Activated T-helper 1 cell treated with anti-CD3 and anti-CD28 coated beads, Interleukin-12 subunit alpha, Interleukin-12 subunit beta, Interleukin-2, Interleukin-4 antibody, amounts not matched to agents 30 ng/mL and 10 ng/mL and 1 ng/mL, durations not matched to agents 14 hours and 24 hours and 36 hours (primary cell): ENCODE measurements at regions of chr14 and their contacts with region 1.

Region 1: DNA sequence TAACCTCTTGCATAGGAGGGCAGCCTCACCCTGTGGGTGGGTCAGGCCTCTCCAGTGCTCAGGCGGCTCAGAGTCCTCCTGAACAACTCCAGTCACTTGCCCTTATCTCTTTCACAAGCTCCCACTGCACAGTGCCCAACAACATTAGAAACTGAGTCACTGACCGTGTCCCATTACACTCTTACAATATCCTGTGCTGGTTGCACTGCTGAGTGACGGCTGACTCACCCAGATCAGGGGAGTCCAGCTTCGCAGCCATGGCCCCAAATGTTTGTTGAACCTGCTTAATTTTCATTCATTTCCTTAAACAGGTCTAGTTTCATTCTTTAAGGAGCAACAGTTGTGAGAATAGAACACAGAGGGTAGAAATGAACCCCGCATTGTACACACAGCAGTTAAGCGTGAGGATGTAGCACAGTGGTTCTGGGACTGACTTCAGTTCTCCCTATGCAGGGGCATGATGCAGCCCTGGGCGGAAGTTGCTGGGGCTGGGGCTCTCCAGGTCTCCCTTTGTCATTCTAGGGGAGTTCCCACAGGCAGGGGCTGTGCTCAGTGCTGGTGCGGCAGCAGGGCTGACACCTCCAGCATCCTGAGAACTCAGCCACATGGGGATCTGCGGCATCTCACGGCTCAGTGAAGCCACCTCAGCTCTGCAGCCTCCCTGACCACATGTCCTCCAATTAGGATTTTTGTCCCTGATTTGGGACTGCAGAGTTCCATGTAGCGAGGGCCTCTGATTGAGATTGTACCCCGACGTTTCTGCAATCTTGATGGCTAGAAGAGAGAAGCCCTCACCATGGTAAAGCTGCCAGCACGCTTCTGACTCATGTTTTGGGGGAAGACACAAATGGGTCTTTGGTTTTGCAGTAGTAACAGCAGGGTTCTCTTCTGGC is 16.1 kb downstream of the GPR68 start:
- DNase-seq: peak; percentile 87
- H3K4me3 Mint-ChIP-seq: peak overlapping the region; percentile 80
- H3K27ac Mint-ChIP-seq: peak overlapping the region; percentile 100
- H3K4me1 Mint-ChIP-seq: peaks cover 89% of the 10 kb centered on the region
- H3K27me3 Mint-ChIP-seq: no peaks in the 10 kb centered on the region

Region 2: DNA sequence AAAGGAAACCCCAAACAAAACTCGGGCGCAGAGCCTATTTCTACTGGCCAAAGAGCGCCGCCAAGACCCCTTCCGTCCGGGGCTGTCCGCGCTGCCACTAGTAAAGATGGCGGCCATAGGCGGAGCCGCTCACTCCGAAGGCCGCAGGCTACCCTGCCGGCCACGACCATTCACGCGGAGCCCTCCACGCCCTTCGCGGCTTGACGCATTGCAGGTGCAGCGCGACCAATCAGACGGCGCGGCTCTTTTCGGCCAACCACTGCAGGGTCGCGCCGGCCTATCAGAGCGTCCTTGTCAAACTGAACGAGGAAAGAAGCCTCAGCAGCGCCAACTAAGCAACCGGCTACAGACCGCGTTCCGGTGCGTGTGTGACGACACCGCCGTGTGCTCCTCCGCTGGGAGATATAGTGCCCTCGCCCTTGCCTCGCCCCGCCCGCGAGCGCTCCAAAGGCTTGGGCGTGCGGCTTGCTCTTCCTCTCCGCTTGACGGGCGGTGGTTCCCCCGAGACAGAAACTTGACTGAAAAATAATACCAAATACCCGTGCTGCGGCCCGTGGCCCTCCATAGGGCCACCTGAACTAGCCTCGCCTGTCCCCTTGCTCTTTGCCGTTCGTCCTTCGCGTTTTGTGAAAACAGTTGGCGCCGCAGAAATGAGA is 845.2 kb before region 1 on chr14:
- intact Hi-C with region 1: loop called (anchors 1 kb)
- DNase-seq: peak; percentile 98
- H3K4me3 Mint-ChIP-seq: no peak overlapping the region
- H3K27ac Mint-ChIP-seq: no peak overlapping the region
- H3K4me1 Mint-ChIP-seq: peaks cover 6% of the 10 kb centered on the region
- H3K27me3 Mint-ChIP-seq: peaks cover 1% of the 10 kb centered on the region

Region 3: DNA sequence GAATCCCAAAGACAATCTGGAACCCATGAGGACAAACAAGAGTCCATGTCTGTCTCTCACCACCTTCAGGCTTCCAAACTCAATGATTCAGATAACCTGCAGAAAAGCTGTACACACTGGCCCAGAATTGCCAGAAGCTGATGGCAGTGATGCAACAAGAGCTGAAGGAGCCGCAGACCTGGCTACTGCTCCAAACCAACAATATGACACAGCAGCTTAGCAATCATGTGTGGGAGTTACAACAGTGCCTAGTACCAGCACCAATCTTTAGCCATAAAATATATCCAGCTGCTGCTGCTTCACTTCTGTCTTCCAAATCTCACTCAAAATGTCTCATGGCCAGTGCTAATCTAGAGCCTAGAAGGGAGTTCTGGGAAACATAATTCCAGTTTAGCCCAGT is 189.9 kb before region 1 on chr14:
- intact Hi-C with region 1: loop called (anchors 5 kb)
- DNase-seq: no peak
- H3K4me3 Mint-ChIP-seq: no peak overlapping the region
- H3K27ac Mint-ChIP-seq: no peak overlapping the region
- H3K4me1 Mint-ChIP-seq: peaks cover 73% of the 10 kb centered on the region
- H3K27me3 Mint-ChIP-seq: no peaks in the 10 kb centered on the region

Region 4: GRCh38 chr14:91193069-91193468 is 35.3 kb before region 1 on chr14:
- intact Hi-C with region 1: loop called (anchors 1 kb)
- DNase-seq: no peak
- H3K4me3 Mint-ChIP-seq: no peak overlapping the region
- H3K27ac Mint-ChIP-seq: no peak overlapping the region
- H3K4me1 Mint-ChIP-seq: peaks cover 43% of the 10 kb centered on the region
- H3K27me3 Mint-ChIP-seq: no peaks in the 10 kb centered on the region

Region 5: DNA sequence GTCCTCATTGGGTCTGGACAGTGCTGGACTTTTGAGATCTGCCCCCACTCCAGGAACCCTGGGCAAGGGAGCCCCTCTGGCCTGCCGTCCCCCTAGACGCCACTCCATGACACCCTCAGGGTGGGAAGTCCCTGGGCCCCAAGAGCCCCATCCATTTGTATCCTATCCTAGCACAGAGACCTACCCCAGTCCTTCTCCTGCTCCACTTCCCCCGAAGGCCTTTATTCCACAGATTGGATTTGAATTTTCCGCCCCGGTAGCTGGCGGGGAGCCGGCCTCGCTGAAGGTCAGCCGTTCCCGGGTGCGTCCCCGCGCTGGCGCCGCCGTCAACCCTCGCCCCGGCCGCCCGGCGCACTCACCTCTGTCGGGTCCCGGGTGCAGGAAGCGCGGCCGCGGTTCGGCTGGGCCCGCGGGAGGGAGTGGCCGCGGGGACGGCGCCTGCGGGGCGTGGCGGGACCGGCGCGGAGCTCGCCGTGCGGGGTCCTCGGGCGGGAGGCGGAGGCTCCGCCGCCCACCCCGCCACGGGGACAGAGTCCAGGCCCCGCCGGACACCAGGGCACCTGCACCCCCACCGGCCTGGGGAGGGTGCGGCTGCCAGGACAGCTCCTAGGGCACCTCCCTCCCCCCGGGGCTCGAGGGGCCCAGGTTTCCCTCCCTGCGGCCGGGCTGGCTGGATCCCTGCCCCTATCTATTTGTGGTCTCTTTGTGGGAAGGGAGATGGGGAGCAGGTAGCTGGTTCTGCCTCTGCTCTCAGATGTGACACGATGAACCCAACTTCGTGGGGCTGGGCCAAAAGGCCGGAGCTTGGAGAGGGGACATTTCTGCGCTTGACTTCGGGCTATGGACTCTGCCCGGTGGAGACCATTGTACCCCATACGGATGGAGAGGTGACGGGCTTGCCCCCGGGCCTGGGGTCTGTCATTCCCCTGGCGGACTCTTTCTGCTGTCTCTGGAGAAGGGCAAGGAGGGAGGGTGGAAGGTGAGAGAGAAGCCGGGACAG is 36.1 kb after region 1 on chr14:
- intact Hi-C with region 1: loop called (anchors 1 kb)
- DNase-seq: no peak
- H3K4me3 Mint-ChIP-seq: peak overlapping the region; percentile 72
- H3K27ac Mint-ChIP-seq: peak overlapping the region; percentile 45
- H3K4me1 Mint-ChIP-seq: peaks cover 70% of the 10 kb centered on the region
- H3K27me3 Mint-ChIP-seq: no peaks in the 10 kb centered on the region

Region 6: GRCh38 chr14:91350813-91351511 is 122.6 kb after region 1 on chr14:
- intact Hi-C with region 1: loop called (anchors 1 kb)
- DNase-seq: peak; percentile 72
- H3K4me3 Mint-ChIP-seq: peak overlapping the region; percentile 74
- H3K27ac Mint-ChIP-seq: peak overlapping the region; percentile 94
- H3K4me1 Mint-ChIP-seq: peaks cover 89% of the 10 kb centered on the region
- H3K27me3 Mint-ChIP-seq: no peaks in the 10 kb centered on the region

Region 7: DNA sequence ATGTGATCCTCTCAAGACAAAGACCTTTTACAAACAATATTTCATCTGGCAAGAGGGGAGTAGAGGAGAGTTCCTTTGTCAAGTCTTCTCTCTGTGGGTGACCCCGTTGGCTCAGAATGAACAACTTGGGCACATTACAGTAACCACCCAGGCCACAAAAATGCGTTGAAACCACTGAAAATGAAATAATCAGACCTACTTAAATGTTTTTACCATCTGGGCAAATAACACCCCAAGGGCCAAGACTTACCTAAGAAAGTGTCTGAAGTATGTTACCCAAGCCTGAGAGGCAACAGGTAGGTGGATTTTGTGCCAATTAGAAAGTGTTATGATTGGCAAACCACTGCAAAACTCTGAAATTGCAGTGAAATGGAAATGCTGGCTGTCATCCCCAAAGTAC is 637.7 kb after region 1 on chr14:
- intact Hi-C with region 1: loop called (anchors 10 kb)
- DNase-seq: no peak
- H3K4me3 Mint-ChIP-seq: peak overlapping the region; percentile 95
- H3K27ac Mint-ChIP-seq: peak overlapping the region; percentile 97
- H3K4me1 Mint-ChIP-seq: peaks cover 89% of the 10 kb centered on the region
- H3K27me3 Mint-ChIP-seq: no peaks in the 10 kb centered on the region